ENCODE measurements at regions of chr11 and their contacts with region 1.

Region 1: DNA sequence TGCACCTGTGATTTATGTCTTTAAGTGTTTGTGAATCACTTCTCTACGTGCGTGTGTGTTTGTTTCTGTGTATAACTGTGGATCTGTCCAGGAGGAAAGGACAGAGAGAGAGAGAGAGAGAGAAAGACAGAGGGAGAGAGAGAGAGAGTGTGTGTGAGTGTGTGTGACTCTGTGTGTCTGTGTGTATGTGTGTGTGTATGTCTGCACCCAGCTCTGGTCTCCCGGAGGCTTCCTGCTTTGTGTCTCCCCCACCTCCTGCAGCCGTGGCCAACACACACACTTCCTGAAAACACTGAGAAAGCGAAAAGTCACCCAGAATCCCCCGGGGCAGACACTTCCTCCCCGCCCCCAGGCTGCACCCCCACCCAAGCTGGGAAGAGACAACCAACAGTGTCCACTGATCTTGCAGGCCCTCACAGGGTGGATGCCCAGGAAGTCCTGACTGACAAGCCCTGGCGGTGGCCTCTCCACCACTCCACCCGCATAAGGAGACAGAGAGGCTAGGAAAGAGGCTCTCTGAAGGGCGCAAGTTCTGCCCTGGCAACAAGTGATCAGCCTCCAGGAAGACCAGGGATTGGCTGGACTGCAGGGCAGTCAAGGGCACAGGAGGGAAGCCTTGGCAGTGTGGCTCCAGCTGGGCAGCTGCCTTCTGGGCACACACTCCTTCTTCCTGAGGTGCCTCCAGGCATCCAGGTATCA is 30.0 kb downstream of the ARAP1 start:
- DNase-seq: peak in 1 of 2 experiments; percentile 86
- H3K4me3 ChIP-seq: no peak overlapping the region
- H3K27ac ChIP-seq: 0 out of 2 replicates have a peak overlapping the region, but pooled peaks have one; percentile 66
- H3K4me1 ChIP-seq: peaks cover 0 to 9% (median 5%) of the 10 kb centered on the region in 4 experiments; a peak in 3 of 7 replicates
- H3K27me3 ChIP-seq: no peaks in the 10 kb centered on the region
- CTCF ChIP-seq: no peak
- EP300 ChIP-seq: no peak
- POLR2A ChIP-seq: no peak
- RAD21 ChIP-seq: no peak

Region 2: DNA sequence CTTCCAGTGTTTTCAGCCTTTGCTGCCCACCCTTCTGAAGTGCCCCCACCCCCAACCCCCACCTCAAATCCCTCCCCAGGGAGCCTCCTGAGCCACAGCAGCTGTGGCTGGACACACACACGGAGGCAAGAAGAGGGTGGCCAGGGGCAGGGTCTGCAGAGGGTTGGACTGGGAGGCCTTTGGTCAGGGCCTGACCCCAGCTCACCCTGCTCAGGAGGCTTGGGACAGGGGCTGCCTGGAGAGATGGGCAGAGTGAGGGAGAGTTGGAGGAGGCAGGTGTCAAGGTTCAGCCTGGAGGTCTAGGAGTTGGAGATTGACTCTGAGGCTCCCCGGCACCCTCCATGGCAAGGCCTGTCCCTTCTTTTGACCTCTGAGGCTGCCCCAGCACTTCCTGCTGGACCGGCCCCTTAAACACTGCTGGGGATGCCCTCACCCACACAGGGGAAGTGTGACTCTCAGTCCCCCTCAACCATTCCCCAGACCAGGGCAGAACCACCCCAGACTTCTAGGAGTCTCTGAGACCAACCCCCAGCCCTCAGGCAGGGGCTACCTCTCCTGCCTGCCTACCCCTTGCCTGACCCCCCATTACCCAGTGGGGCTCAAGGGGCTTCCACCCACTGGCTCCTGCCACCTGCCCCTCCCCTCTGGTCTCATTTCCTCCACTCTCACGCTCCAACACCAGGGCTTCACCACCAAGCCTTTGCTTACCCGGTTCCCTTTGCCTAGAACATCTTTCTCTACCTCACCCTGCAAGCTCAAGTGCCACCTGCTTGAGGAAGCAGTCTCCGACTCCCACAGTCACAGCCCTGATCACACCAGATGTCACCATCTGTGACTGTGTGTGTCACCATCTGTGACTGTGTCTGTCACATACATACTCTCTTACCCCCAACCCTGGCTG is 21.4 kb after region 1 on chr11:
- CTCF ChIA-PET with region 1: interaction called, 18 read pairs
- POLR2A ChIA-PET with region 1: interaction called, 3 read pairs
- DNase-seq: no peak
- H3K4me3 ChIP-seq: no peak overlapping the region
- H3K27ac ChIP-seq: 0 out of 2 replicates have a peak overlapping the region, but pooled peaks have one; percentile 39
- H3K4me1 ChIP-seq: peaks cover 8 to 24% (median 14%) of the 10 kb centered on the region in 4 experiments
- H3K27me3 ChIP-seq: no peaks in the 10 kb centered on the region
- CTCF ChIP-seq: no peak
- EP300 ChIP-seq: no peak
- POLR2A ChIP-seq: no peak
- RAD21 ChIP-seq: no peak

Region 3: DNA sequence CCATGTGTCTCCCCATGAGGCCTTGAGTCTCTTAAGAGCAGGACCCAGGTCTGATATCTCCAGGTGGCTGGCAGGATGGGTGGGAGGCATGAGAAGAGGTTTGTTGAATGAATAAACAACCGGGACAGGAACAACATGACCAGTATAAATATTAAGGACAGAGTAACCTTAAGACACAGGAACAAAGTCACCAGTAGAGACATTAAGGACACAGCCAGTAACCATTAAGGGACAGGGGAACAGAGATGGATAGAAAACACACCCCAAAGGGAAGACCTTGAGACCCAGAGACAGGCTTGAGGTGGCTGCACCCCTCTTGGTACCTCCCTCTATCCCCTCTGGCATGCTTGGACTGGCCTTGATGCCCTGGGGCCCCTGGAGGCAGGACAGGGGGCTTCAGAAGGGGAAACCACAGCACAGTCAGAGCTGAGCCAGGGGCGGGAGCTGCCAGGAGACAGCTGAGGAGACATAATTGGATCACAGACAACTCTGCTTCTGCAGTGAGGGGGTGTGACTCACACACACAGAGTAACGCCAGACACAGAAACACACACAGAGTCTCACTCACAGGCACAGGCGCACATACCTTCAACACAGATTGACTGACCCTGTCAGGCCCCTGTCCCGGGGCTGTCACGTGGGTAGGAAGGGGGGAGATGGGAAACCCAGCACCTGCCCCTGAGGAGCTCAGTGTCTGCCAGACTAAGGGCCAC is 50.9 kb after region 1 on chr11:
- CTCF ChIA-PET with region 1: interaction called, 20 read pairs
- POLR2A ChIA-PET with region 1: no interaction called
- DNase-seq: no peak
- H3K4me3 ChIP-seq: no peak overlapping the region
- H3K27ac ChIP-seq: no peak overlapping the region
- H3K4me1 ChIP-seq: peaks cover 0 to 8% (median 7%) of the 10 kb centered on the region in 4 experiments; a peak in 4 of 7 replicates
- H3K27me3 ChIP-seq: no peaks in the 10 kb centered on the region
- CTCF ChIP-seq: no peak
- EP300 ChIP-seq: no peak
- POLR2A ChIP-seq: no peak
- RAD21 ChIP-seq: no peak

Region 4: DNA sequence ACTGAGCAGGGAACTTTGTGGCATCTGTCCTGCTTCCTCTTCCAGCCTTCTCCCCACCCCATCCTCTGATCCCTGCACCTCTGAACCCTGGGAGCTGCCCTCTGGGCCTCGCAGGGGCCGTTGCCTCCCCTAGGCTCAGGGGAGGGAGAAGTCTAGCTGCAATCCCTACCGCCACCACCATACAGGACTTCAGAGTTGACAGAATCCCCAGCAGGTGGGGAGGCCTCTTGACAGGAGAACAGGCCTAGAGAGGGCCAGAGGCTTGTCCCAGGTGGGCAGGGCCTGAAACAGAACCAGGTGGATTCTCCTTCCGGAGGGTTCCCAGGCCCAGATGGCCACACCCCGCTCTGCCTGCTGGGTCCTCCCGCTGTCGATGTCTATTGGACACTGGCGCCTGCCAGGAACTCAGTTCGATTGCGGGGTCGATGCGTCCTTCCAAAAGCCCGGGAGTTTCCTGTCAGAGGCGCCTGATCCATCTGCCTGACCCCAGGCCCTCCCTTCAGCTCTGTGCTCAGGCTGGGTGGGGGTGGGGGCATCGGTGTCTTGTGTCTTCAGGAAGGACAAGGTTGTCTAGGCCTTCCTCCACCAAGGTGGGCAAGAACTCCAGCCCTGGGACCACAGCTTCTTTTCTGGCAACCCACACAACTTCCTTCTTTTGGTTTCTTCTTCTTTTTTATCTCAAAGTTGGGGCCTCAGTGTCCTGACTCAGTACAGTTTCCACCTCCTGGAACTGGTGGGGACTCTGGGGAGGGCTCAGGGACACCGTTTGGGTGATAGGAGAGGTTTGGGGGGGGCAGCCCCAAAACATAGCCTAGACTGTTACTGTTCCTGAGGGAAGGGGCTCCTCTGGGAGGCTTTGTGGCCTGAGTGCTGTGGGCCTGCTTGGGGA is 65.3 kb after region 1 on chr11:
- CTCF ChIA-PET with region 1: interaction called, 105 read pairs
- POLR2A ChIA-PET with region 1: interaction called, 3 read pairs
- DNase-seq: peak; percentile 54 to 82
- H3K4me3 ChIP-seq: no peak overlapping the region
- H3K27ac ChIP-seq: no peak overlapping the region
- H3K4me1 ChIP-seq: peaks cover 0 to 7% (median 2%) of the 10 kb centered on the region in 4 experiments; a peak in 6 of 7 replicates
- H3K27me3 ChIP-seq: no peaks in the 10 kb centered on the region
- CTCF ChIP-seq: peak; percentile 49 to 78 (median 61)
- EP300 ChIP-seq: no peak
- POLR2A ChIP-seq: no peak
- RAD21 ChIP-seq: peak in 1 of 2 experiments; percentile 50; a peak in 2 of 4 replicates

Region 5: DNA sequence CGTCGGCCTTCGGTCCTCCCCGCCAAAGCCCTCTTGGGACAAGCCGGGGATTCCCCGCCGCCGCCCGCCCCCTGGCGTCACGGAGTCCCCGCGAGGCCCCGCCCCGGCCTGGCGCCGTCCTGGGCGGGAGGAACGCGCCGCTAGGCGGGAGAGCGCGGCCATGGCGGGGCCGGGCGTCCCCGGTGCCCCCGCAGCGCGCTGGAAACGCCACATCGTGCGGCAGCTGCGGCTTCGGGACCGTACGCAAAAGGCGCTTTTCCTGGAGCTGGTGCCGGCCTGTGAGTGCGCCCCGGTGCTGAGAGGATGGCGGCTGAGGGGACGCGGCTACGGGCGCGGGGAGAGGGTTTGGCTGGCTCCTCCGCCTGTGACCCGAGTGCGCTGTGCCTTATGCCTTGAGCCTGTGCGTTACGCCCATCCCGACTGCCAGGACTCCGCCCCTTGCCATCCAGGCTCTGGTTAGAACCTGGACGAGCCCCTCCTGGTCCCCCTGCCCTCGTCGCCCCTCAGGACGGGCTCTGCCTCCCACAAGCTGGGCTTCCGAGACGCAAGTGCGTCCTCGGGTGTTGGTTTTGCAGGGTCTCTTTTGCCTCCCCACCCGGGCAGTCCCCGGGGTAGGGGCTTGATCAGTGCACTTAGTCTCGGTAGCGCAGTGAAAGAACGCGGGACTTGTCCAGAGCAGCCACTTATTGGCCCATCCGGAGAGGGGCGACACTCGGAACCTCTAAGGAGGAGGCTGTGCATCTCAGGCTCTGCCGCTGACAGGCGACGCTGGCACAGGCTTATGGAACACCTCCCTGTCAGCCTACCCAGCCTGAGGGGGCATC is 92.3 kb after region 1 on chr11 and contains the start of gene ATG16L2:
- CTCF ChIA-PET with region 1: interaction called, 29 read pairs
- POLR2A ChIA-PET with region 1: interaction called, 3 read pairs
- DNase-seq: peak; percentile 50 to 93
- H3K4me3 ChIP-seq: peak within 1 kb of the TSS; percentile 58 to 84 (median 79)
- H3K27ac ChIP-seq: peak within 1 kb of the TSS; percentile 93
- H3K4me1 ChIP-seq: peaks cover 0 to 15% (median 9%) of the 10 kb centered on the region in 4 experiments; a peak in 5 of 7 replicates
- H3K27me3 ChIP-seq: peaks cover 0 to 7% (median 4%) of the 10 kb centered on the region in 4 experiments; a peak in 4 of 7 replicates
- CTCF ChIP-seq: peak in 1 of 3 experiments; percentile 17; a peak in 2 of 4 replicates
- EP300 ChIP-seq: no peak
- POLR2A ChIP-seq: peak in 1 of 2 experiments; percentile 91; a peak in 2 of 3 replicates
- RAD21 ChIP-seq: peak; percentile 1 to 37; a peak in 1 of 4 replicates
- total RNA-seq, gene ATG16L2: 11.0 and 11.7 TPM in 2 replicates

Region 6: DNA sequence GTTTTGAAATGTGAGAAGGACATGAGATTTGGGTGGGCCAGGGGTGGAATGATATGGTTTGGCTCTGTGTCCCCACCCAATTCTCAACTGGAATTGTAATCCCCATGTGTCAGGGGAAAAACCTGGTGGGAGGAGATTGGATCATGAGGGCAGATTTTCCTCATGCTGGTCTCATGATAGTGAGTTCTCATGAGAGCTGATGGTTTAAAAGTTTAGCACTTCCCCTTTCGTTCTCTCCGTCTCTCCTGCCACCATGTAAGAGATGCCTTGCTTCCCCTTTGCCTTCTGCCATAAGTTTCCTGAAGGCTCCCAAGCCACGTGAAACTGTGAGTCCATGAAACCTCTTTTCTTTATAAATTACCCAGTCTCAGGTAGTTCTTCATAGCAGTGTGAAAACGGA is 306.4 kb after region 1 on chr11:
- CTCF ChIA-PET with region 1: no interaction called
- POLR2A ChIA-PET with region 1: no interaction called
- DNase-seq: no peak
- H3K4me3 ChIP-seq: no peak overlapping the region
- H3K27ac ChIP-seq: no peak overlapping the region
- H3K4me1 ChIP-seq: peaks cover 0 to 3% (median 0%) of the 10 kb centered on the region in 4 experiments; a peak in 3 of 7 replicates
- H3K27me3 ChIP-seq: no peaks in the 10 kb centered on the region
- CTCF ChIP-seq: no peak
- EP300 ChIP-seq: no peak
- POLR2A ChIP-seq: no peak
- RAD21 ChIP-seq: no peak

Measured in H1 (cell line).